Right ventricle myocardium inferior (tissue), 1 donor: ENCODE measurements at regions of chr1 and their contacts with region 1.

Region 1: DNA sequence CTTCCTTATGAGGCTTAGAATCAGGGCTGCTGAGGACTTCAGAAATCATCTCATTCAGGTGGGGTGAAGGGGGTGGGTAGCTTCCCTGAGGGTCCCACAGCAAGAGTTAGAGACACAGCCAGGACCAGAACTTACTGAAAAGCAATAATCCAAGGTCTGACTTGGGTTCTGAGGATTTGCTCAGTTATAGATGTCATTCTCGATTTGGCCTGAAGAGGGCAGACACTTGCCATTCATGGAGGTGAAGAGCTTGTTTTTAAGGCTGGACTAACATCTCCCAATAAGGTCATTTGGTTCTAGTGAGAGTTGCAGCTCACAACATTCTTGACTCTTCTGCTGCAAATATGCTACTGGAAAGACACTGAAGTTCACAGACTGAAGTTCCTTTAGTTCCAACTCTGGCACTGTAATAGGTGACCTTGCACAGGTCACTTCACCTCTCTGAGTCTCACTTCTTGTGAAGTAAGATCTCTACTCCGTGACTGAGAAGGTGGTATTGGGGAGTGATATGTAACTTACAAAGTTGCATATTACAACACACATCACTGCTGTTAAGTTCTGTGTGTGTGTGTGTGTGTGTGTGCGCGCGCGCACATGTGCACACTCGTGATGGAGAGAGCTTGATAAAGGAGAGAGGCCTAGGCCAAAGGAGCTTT is 69.8 kb upstream of the DIRAS3 start:
- DNase-seq: no peak
- ATAC-seq: peak; percentile 40

Region 2: GRCh38 chr1:67535474-67535873 is 584.8 kb before region 1 on chr1:
- intact Hi-C with region 1: loop called (anchors 10 kb)
- DNase-seq: peak; percentile 74
- ATAC-seq: peak; percentile 69

Region 3: DNA sequence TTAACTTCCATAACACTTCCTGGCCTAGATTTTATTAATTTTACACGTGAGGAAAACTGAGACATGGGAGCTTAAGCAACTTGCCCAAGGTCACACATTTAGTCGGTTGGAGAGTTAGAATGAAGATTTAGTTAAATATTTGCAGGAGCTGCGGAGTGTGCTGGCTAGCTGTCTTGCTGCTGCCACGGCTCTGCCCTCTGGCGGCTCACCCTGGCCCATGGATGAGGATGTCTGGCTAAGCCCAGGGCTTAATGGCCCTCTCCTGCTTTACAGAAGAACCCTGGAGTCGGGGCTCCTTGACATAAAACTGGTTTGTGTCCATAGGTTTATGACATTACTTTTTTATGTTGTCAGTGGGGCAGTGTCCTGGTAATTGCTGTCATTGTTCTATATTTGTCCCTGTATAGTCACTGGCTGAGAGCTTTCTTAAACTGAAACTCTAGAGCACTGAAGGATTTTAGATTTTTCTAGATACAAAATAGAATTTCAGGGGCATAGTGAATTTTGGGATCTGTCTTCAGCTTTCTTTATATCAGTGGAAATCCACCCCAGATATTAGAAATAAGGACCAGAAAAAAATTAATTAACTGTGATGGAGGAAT is 200.9 kb after region 1 on chr1:
- intact Hi-C with region 1: loop called (anchors 1 kb)
- DNase-seq: peak; percentile 72
- ATAC-seq: peak; percentile 89

Region 4: GRCh38 chr1:68346188-68346808 is 226.0 kb after region 1 on chr1:
- intact Hi-C with region 1: loop called (anchors 1 kb)
- DNase-seq: no peak
- ATAC-seq: no peak

Region 5: GRCh38 chr1:68442822-68443556 is 322.7 kb after region 1 on chr1:
- intact Hi-C with region 1: loop called (anchors 5 kb)
- DNase-seq: no peak
- ATAC-seq: no peak

Region 6: GRCh38 chr1:68516066-68516465 is 395.8 kb after region 1 on chr1:
- intact Hi-C with region 1: no loop called
- DNase-seq: no peak
- ATAC-seq: no peak